ENCODE measurements at regions of chr13 and their contacts with region 1.

Region 1: DNA sequence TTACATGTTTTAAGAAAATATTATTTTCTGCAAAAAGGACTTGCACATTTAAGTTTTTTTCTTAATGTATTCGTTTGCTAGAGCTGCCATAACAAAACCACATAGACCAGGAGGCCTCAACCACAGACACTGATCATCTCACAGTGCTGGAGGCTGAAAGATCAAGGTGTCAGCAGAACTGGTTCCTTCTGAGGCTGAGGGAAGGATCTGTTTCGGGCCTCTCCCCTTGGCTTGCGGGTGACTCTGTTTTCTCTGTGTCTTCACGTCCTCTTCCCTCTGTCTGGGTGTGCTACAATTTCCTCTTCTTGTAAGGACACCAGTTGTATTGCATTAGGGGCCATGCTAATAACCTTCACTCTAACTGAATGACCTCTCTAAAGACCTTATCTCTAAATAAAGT is 364.2 kb downstream of the IRS2 start:
- DNase-seq: no peak
- ATAC-seq: no peak
- H3K4me3 ChIP-seq: no peak overlapping the region
- H3K27ac ChIP-seq: no peak overlapping the region
- H3K4me1 ChIP-seq: no peaks in the 10 kb centered on the region
- H3K27me3 ChIP-seq: no peaks in the 10 kb centered on the region; the same call in 1 of the 2 replicates
- CTCF ChIP-seq: no peak
- POLR2A ChIP-seq: no peak
- RAD21 ChIP-seq: no peak

Region 2: DNA sequence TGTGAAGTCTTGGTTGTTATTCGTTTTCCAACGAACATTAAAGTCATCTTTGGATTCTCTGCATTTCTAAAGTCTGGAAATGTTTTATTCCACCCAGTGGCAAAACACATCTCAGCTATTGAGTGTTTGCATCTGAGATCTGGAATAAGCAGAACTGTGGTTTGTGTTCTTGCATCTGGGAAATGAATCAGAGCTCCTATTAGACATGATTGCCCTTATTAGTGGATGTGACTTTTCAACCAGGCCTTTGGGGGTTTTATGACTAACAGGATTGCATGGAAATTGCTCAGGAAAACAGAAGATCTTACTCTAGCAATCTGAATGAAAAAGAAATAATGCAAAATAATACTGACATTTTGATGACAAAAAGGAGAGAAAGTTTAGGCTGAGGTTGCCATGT is 124.5 kb before region 1 on chr13:
- CTCF ChIA-PET with region 1: no interaction called
- POLR2A ChIA-PET with region 1: no interaction called
- dilution Hi-C with region 1: no loop called
- in situ Hi-C with region 1: no loop called
- intact Hi-C with region 1: no loop called
- DNase-seq: peak; percentile 90
- ATAC-seq: peak; percentile 74
- H3K4me3 ChIP-seq: no peak overlapping the region
- H3K27ac ChIP-seq: no peak overlapping the region; the same call in 1 of the 2 replicates
- H3K4me1 ChIP-seq: peaks cover 3% of the 10 kb centered on the region; the same call in 1 of the 2 replicates
- H3K27me3 ChIP-seq: no peaks in the 10 kb centered on the region
- CTCF ChIP-seq: no peak
- POLR2A ChIP-seq: no peak
- RAD21 ChIP-seq: 0 out of 2 replicates have a peak, but pooled peaks have one; percentile 13

Region 3: GRCh38 chr13:109383670-109384069 is 38.5 kb before region 1 on chr13:
- CTCF ChIA-PET with region 1: no interaction called
- POLR2A ChIA-PET with region 1: interaction called, 12 read pairs
- dilution Hi-C with region 1: no loop called
- in situ Hi-C with region 1: no loop called
- intact Hi-C with region 1: no loop called
- DNase-seq: peak; percentile 79
- ATAC-seq: peak; percentile 41
- H3K4me3 ChIP-seq: no peak overlapping the region
- H3K27ac ChIP-seq: no peak overlapping the region
- H3K4me1 ChIP-seq: peaks cover 12% of the 10 kb centered on the region
- H3K27me3 ChIP-seq: no peaks in the 10 kb centered on the region
- CTCF ChIP-seq: no peak
- POLR2A ChIP-seq: no peak
- RAD21 ChIP-seq: no peak

Region 4: GRCh38 chr13:109451726-109452125 is 29.6 kb after region 1 on chr13:
- CTCF ChIA-PET with region 1: no interaction called
- POLR2A ChIA-PET with region 1: no interaction called
- dilution Hi-C with region 1: no loop called
- in situ Hi-C with region 1: no loop called
- intact Hi-C with region 1: no loop called
- DNase-seq: no peak
- ATAC-seq: no peak
- H3K4me3 ChIP-seq: no peak overlapping the region
- H3K27ac ChIP-seq: no peak overlapping the region
- H3K4me1 ChIP-seq: peaks cover 4% of the 10 kb centered on the region
- H3K27me3 ChIP-seq: 0 out of 2 replicates have a peak, but pooled peaks cover 2% of the 10 kb centered on the region
- CTCF ChIP-seq: no peak
- POLR2A ChIP-seq: no peak
- RAD21 ChIP-seq: no peak

Region 5: DNA sequence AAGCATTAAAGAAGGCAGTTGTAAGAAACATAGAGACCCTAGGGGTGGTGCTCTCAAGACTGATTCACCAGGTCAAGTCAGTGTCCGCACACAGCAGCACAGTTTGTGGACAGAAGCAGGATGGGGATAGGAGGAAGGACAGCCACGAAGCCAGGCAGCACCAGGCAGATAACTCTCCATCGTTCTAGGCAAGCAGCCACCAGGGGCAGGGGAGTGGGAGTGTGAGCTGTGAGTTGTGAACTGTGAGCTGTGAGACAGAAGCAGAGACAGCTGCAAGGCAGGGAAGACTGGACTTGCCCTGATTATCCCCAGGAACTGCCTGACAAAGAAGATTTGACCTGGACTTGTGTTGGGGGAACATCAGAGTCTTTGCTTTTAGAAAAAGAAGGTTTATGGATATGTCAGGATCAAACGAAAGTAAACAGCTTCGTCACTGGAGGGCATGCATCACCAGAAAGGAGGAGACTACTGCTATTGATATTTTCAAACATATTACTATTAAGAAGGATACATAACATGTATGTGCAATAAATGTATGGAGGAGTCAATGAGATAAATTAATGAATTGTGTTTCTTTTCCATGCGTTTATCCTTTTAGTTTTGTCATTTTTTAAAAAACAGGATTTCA is 78.1 kb after region 1 on chr13:
- CTCF ChIA-PET with region 1: no interaction called
- POLR2A ChIA-PET with region 1: interaction called, 10 read pairs
- dilution Hi-C with region 1: no loop called
- in situ Hi-C with region 1: no loop called
- intact Hi-C with region 1: no loop called
- DNase-seq: peak; percentile 11
- ATAC-seq: peak; percentile 78
- H3K4me3 ChIP-seq: no peak overlapping the region
- H3K27ac ChIP-seq: no peak overlapping the region
- H3K4me1 ChIP-seq: no peaks in the 10 kb centered on the region
- H3K27me3 ChIP-seq: peaks cover 6% of the 10 kb centered on the region
- CTCF ChIP-seq: 0 out of 2 replicates have a peak, but pooled peaks have one; percentile 4
- POLR2A ChIP-seq: no peak
- RAD21 ChIP-seq: no peak

Region 6: GRCh38 chr13:109667056-109667455 is 244.9 kb after region 1 on chr13:
- CTCF ChIA-PET with region 1: no interaction called
- POLR2A ChIA-PET with region 1: no interaction called
- dilution Hi-C with region 1: no loop called
- in situ Hi-C with region 1: no loop called
- intact Hi-C with region 1: no loop called
- DNase-seq: peak; percentile 16
- ATAC-seq: peak; percentile 78
- H3K4me3 ChIP-seq: no peak overlapping the region
- H3K27ac ChIP-seq: no peak overlapping the region
- H3K4me1 ChIP-seq: no peaks in the 10 kb centered on the region
- H3K27me3 ChIP-seq: peaks cover 6% of the 10 kb centered on the region
- CTCF ChIP-seq: no peak
- POLR2A ChIP-seq: no peak
- RAD21 ChIP-seq: no peak

Region 7: DNA sequence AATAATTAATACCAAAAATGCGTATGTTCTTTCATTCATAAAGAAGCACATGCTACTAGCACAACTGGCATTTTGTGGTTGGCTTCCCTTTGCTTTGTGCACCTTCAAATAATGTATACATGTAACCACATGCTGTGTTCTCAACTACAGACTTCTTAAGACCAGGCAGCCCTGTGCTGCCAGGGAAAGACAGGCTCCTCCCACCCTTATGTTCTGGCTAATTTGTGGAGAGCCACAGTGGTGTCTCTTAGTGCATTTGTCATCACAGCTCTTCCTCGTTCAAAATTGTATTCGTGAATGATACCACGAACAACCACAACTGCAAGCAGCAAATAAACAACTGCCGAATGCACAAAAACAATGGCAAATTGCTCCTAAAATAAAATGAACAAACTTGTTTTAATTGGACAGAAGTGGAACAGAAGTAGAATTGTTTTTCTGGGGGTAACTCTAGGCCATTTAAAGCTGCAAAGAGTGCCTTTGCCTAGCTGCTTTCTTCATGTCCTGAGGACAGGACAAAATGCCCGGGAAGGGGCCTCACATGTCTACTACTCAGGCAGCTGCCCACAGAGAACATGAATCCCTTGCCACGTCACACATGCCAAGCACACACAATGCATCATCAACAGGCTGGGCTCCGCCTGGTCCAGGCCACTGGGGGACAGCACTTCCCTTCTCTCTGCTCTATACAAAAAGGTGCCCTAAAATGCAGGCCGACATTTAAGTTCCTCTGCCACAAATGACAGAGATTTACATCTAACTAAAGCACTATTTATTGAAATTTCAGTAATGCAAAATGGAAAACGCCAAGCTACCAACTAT is 342.5 kb after region 1 on chr13:
- CTCF ChIA-PET with region 1: no interaction called
- POLR2A ChIA-PET with region 1: no interaction called
- dilution Hi-C with region 1: no loop called
- in situ Hi-C with region 1: no loop called
- intact Hi-C with region 1: no loop called
- DNase-seq: peak; percentile 21
- ATAC-seq: peak; percentile 44
- H3K4me3 ChIP-seq: no peak overlapping the region
- H3K27ac ChIP-seq: no peak overlapping the region
- H3K4me1 ChIP-seq: no peaks in the 10 kb centered on the region
- H3K27me3 ChIP-seq: no peaks in the 10 kb centered on the region
- CTCF ChIP-seq: 0 out of 2 replicates have a peak, but pooled peaks have one; percentile 23
- POLR2A ChIP-seq: no peak
- RAD21 ChIP-seq: peak; percentile 36

Measured in IMR-90 (cell line).